ENCODE measurements at regions of chr3 and their contacts with region 1.

Region 1: GRCh38 chr3:5057857-5058324 is 64.2 kb upstream of the ARL8B start:
- DNase-seq: peak; percentile 62
- CTCF ChIP-seq: peak; percentile 73

Region 2: GRCh38 chr3:4350789-4351163 is 707.1 kb before region 1 on chr3:
- in situ Hi-C with region 1: loop called (anchors 25 kb)
- DNase-seq: peak; percentile 70
- CTCF ChIP-seq: peak; percentile 63

Region 3: DNA sequence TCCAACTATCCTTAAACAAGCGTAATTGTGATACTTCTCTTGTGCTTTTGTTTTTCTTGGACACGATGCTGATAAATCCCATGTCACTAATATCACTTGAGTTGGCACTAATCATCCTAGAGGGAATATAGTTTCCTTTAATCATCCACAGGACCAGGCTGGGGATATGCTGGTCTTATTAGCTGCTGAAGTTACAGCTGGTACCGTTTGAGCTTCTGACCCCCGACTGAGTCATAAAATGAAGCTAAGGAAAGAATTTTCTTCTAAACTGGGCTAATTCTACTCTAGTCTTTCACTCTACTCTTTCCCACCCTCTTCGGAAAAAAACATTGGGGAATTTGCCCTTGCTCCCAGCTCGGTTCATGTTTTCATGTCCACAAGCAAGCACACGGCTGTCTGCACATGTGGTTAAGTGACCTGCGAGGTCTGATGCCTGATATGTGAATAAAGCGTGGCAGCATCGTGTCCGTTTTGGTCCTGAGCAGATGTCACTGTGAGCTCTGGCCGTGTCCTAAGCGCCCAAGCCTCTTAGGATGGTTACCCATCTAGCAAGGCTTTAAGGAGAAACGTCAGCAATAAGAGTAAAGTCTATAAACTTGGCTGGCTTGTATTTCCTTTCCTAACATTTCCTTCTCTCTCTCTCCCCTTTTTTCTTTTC is 341.1 kb before region 1 on chr3:
- in situ Hi-C with region 1: loop called (anchors 5 kb)
- DNase-seq: no peak
- CTCF ChIP-seq: no peak

Region 4: DNA sequence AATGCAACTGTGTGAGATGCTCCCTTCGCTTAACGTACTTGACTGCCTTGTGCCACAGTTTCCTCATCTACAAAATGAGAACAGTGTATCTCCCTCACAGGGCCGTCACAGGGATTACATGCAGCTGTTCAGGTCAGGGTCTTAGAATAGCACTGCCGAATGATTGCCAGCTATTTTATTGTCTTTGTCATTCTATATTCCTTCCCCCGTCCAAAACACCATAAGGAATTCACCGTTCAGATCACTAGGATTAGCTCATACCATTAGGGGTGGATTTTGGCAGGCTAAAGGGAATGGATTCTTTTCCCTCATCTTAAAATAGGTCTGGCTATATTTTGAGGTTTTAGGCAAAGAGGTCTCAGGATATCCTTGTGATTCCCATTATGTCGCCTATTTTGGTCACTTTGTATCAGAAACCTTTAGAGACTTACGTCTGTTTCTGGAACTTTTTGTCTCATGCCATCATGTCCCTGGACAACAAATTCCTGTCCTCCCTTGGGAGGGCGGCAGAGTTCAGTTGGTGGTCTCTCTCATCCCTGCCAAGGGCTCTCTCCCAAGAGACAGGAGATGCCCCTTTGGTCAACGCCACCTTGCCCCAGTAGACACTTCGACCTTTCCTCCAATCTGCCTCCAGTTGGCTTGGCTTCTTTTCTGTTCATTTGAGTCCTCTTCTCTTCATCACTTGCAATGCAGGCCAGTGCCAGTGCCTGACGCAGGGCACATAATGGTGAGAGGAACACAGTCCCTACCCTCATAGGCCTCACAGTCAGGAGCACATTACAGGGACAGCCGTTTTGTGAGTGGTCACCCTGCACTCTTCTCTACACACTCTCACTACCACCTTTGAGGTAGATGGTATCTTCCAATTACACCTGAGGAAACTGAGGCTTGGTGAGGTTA is 250.3 kb before region 1 on chr3:
- in situ Hi-C with region 1: no loop called
- DNase-seq: no peak
- CTCF ChIP-seq: no peak